Sigmoid colon (tissue), 7 donors: ENCODE measurements at regions of chr1 and their contacts with region 1.

Region 1: DNA sequence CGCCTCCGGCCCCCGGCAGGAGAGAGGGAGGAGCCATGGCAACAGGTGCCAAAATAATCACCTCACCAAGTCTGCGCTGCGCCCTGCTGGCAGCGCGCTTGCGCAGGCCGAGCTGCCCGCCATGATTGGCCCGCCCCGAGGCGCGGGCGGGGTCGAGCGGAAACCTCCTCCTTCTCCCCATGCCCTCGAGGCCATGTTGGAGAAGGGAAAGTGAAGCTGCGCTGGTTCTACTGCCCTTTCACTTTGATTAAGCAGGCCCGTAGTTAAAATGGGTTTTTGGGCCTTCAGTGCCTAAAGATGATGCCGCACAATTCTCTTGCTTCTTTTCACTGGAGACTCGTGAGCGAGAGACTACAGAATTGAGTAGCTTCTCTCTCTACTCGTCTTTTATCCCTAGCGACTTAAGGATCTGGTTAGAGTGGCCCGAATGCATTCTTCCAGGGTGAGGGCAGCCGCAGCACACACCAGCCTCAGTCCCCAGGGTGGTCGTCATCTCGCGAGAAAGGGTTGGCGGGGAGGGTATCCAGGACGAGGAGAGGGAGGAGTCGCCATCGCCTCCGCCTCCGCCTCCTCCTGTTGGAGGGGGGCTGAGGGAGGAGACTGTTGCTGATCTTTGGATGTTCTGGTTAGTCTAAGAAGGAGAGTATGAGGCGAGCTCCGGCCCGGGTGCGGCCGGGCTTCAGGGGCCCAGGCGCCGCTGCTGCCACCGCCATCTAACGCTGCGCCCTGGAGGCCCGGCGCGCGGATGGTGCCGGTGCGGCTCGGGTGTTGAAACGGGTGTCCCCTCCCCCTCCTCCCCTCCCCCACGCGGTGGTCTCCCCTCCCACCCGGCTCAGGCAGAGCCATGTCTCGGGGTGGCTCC is at the start of gene DCAF6:
- DNase-seq: peak; percentile 98
- H3K4me3 ChIP-seq: peak within 1 kb of the TSS; percentile 70 to 99 (median 86)
- H3K27ac ChIP-seq: peak within 1 kb of the TSS; percentile 95 to 99 (median 96)
- H3K4me1 ChIP-seq: peaks cover 0 to 54% (median 43%) of the 10 kb centered on the region in 4 donors
- H3K27me3 ChIP-seq: no peaks in the 10 kb centered on the region
- CTCF ChIP-seq: no peak
- EP300 ChIP-seq: peak in 1 of 4 donors; percentile 18
- POLR2A ChIP-seq: peak; percentile 76 to 90
- total RNA-seq, gene DCAF6: 79.6 to 102 (median 86.2) TPM

Region 2: GRCh38 chr1:167599957-167600581 is 336.2 kb before region 1 on chr1:
- intact Hi-C with region 1: loop called (anchors 5 kb)
- DNase-seq: no peak
- H3K4me3 ChIP-seq: no peak overlapping the region
- H3K27ac ChIP-seq: no peak overlapping the region
- H3K4me1 ChIP-seq: peaks cover 0 to 18% (median 14%) of the 10 kb centered on the region in 4 donors
- H3K27me3 ChIP-seq: no peaks in the 10 kb centered on the region
- CTCF ChIP-seq: peak; percentile 24 to 45 (median 40)
- EP300 ChIP-seq: no peak
- POLR2A ChIP-seq: no peak

Region 3: GRCh38 chr1:167721617-167722151 is 214.6 kb before region 1 on chr1 and contains the start of gene MPZL1:
- intact Hi-C with region 1: loop called (anchors 5 kb)
- DNase-seq: peak; percentile 98
- H3K4me3 ChIP-seq: peak within 1 kb of the TSS; percentile 91 to 99 (median 98)
- H3K27ac ChIP-seq: peak within 1 kb of the TSS; percentile 89 to 97 (median 94)
- H3K4me1 ChIP-seq: peaks cover 0 to 49% (median 35%) of the 10 kb centered on the region in 4 donors
- H3K27me3 ChIP-seq: no peaks in the 10 kb centered on the region
- CTCF ChIP-seq: no peak
- EP300 ChIP-seq: no peak
- POLR2A ChIP-seq: peak; percentile 58 to 71
- total RNA-seq, gene MPZL1: 50.9 to 69.5 (median 58.3) TPM

Region 4: GRCh38 chr1:167774710-167775109 is 161.6 kb before region 1 on chr1:
- intact Hi-C with region 1: no loop called
- DNase-seq: no peak
- H3K4me3 ChIP-seq: no peak overlapping the region
- H3K27ac ChIP-seq: no peak overlapping the region
- H3K4me1 ChIP-seq: peaks cover 0 to 3% (median 0%) of the 10 kb centered on the region in 4 donors
- H3K27me3 ChIP-seq: no peaks in the 10 kb centered on the region
- CTCF ChIP-seq: no peak
- EP300 ChIP-seq: no peak
- POLR2A ChIP-seq: no peak

Region 5: DNA sequence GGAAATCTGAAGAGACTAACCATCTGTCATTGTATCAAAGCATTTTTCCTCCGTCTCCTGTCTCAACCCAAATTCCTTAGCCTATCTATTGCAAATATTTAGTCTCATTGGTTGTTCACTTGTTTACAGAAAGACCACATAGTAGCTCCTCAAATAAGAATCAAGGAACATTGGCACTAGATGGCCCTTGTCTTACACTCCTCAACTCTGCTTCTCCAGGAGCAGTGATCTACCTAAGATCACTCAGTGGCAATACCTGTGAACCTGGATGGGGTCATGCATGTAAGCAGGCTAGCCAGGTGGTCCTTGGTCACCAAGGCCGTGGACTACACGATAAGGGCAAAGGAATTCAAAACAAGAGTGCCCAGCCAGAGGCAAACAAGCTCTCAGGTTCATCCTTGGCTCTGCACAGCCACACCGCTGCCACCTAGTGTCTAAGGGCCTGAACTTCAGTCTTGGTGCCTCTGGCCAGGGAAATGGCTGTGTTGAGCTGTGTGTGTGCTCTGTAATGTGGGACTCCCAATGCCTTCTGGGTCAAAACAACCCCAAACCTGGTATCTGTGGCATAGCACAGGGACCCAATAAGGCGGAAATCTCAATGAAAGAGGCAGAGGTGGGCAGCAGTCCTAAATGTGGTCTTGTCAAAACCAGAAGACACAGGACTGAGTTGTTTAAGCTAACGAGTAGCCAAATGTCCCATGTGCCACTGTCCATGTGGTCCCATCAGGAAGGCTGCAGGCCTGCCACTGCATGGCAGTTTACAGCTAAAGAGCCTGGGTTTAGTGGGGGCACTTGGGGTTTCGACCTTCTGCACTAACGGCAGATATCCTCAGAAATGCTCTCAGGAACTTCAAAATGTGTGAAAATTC is 145.9 kb after region 1 on chr1:
- intact Hi-C with region 1: loop called (anchors 5 kb)
- DNase-seq: peak; percentile 83
- H3K4me3 ChIP-seq: no peak overlapping the region
- H3K27ac ChIP-seq: peak overlapping the region in 3 of 4 donors; percentile 11 to 80 (median 42)
- H3K4me1 ChIP-seq: peaks cover 0 to 46% (median 24%) of the 10 kb centered on the region in 4 donors
- H3K27me3 ChIP-seq: no peaks in the 10 kb centered on the region
- CTCF ChIP-seq: peak; percentile 66 to 87 (median 82)
- EP300 ChIP-seq: no peak
- POLR2A ChIP-seq: no peak

Region 6: DNA sequence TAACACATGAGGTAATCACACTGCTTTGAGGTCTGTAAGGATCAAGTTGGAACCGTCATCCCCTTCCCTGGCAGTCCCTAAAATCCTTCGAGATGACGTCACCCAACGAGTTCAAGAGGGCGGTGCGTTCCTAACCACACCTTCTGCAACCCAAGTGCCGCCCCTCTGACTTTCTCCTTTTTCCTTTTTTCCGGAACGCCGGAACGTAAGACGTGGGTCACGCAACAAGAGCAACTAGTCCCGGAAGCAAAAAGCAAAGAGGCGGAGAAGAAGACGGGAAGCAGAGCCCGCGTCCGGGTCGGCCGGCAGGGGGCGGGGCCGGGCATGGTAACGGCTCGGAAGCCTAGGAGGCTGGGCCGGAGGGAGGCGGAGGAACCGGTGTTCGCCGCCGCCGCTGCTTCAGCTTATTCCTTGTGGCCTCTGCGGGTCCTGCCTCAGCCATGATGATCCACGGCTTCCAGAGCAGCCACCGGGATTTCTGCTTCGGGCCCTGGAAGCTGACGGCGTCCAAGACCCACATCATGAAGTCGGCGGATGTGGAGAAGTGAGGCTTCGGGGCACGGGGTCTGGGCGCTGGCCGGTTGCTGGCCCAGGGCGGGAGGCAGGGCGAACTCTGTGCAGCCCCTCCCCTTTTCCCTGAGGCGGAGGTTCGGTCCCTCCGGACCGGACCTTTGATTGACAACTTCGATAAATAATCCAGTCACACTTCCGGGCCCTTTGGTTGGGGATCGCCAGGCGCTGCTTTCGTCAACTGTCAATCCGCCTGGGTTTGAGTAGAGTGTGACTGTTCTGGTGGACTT is 242.5 kb after region 1 on chr1 and contains the start of gene TIPRL:
- intact Hi-C with region 1: loop called (anchors 5 kb)
- DNase-seq: peak; percentile 98
- H3K4me3 ChIP-seq: peak within 1 kb of the TSS; percentile 76 to 84 (median 78)
- H3K27ac ChIP-seq: peak within 1 kb of the TSS; percentile 88 to 95 (median 92)
- H3K4me1 ChIP-seq: peaks cover 0 to 13% (median 10%) of the 10 kb centered on the region in 4 donors
- H3K27me3 ChIP-seq: no peaks in the 10 kb centered on the region
- CTCF ChIP-seq: peak; percentile 40 to 80 (median 74)
- EP300 ChIP-seq: peak in 1 of 4 donors; percentile 65
- POLR2A ChIP-seq: peak; percentile 62 to 75
- total RNA-seq, gene TIPRL: 24.0 to 31.0 (median 30.8) TPM